GM13977 (cell line): ENCODE measurements at regions of chr11 and their contacts with region 1.

Region 1: GRCh38 chr11:126194121-126194543 is 17.3 kb downstream of the RPUSD4 start:
- DNase-seq: peak; percentile 56
- CTCF ChIP-seq: peak; percentile 69

Region 2: DNA sequence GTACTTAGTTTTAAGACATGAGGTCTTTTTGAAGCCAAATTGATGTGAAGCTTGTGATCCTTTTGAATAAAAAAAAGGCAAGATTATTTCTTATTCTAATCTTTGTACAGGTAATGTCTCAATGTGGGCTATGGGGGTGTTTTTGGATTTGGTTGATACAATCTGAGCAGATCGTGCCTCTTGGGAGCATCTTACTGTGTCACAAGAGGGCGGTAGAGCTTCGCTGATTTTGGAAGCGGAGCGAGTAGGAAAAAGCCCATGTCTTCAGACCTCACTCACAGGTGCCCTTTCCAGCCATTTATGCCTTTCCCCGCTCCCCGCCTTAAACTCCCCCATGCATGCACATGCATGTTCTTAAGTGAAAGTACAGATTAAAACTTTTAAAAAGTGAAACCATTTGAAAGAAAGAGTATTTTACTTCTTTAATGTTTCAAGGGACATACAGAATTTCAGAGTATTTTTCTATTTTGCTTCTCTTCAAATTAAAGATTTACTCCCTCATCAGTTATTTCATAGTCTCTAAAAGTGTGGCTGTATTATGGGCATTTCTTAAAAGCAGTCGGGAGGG is 271.0 kb before region 1 on chr11:
- in situ Hi-C with region 1: loop called (anchors 5 kb)
- DNase-seq: peak; percentile 76
- CTCF ChIP-seq: peak; percentile 84

Region 3: DNA sequence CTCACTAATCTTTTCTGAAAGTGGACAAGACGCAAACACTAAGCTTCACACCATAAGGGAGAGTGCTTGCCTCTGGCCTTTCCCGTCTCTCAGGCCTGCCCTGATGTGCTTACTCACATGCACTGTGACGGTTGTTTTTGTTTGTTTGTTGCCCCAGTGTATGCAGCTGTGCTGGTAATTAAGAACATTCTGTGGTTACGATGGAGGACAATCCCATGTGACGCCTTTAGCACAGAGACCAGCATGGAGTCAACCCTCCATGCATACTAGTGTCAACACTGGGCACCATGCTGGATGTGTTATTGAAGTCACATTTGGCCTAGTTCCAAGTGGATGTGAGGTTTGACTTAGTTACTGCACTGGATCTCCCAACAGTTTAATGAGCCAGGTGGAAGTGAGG is 103.7 kb before region 1 on chr11:
- in situ Hi-C with region 1: no loop called
- DNase-seq: no peak
- CTCF ChIP-seq: no peak